Naive thymus-derived CD4-positive, alpha-beta T cell (primary cell): ENCODE measurements at regions of chr3 and their contacts with region 1.

Region 1: GRCh38 chr3:96863129-96863740 is 48.8 kb downstream of the EPHA6 start:
- DNase-seq: no peak
- ATAC-seq: no peak
- H3K4me3 ChIP-seq: no peak overlapping the region
- H3K4me3 Mint-ChIP-seq: no peak overlapping the region
- H3K27ac ChIP-seq: no peak overlapping the region
- H3K27ac Mint-ChIP-seq: no peak overlapping the region
- H3K4me1 ChIP-seq: no peaks in the 10 kb centered on the region
- H3K4me1 Mint-ChIP-seq: no peaks in the 10 kb centered on the region
- H3K27me3 ChIP-seq: no peaks in the 10 kb centered on the region
- H3K27me3 Mint-ChIP-seq: no peaks in the 10 kb centered on the region

Region 2: GRCh38 chr3:96657710-96658109 is 205.5 kb before region 1 on chr3:
- CTCF ChIA-PET with region 1: no interaction called
- POLR2A ChIA-PET with region 1: no interaction called
- intact Hi-C with region 1: no loop called
- DNase-seq: no peak
- ATAC-seq: no peak
- H3K4me3 ChIP-seq: no peak overlapping the region
- H3K4me3 Mint-ChIP-seq: no peak overlapping the region
- H3K27ac ChIP-seq: no peak overlapping the region
- H3K27ac Mint-ChIP-seq: no peak overlapping the region
- H3K4me1 ChIP-seq: no peaks in the 10 kb centered on the region
- H3K4me1 Mint-ChIP-seq: no peaks in the 10 kb centered on the region
- H3K27me3 ChIP-seq: no peaks in the 10 kb centered on the region
- H3K27me3 Mint-ChIP-seq: no peaks in the 10 kb centered on the region

Region 3: DNA sequence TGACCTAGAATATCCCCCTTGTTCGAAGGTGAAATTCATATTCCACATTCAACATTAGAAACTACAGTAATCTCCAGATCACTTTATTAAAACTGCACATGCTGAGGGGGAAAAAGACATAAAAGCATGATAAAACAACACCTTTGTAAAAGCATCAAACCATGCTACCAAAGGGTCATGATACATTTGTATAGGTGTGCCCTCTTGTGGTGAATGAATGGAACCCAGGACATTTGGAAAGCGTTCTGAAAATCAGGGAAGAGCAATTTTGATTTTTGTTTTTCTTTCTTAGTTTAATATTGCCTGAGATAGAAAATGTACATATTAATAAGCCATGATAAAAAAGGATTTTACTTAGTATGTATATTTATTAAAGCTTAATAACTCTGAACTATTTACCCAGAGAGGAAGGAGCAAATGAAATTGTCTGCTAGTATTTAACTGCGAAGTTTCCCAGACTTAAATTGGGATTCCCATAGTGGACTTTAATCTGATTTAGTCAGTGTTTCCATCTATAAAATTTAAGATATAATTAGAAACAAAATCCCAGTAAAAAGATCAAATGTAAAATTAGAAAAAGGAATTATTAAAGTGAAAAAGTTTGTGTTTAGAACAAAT is 795.5 kb after region 1 on chr3:
- CTCF ChIA-PET with region 1: no interaction called
- POLR2A ChIA-PET with region 1: no interaction called
- intact Hi-C with region 1: loop called in 1 of 2 experiments (anchors 10 kb)
- DNase-seq: no peak
- ATAC-seq: no peak
- H3K4me3 ChIP-seq: no peak overlapping the region
- H3K4me3 Mint-ChIP-seq: no peak overlapping the region
- H3K27ac ChIP-seq: no peak overlapping the region
- H3K27ac Mint-ChIP-seq: no peak overlapping the region
- H3K4me1 ChIP-seq: no peaks in the 10 kb centered on the region
- H3K4me1 Mint-ChIP-seq: no peaks in the 10 kb centered on the region
- H3K27me3 ChIP-seq: no peaks in the 10 kb centered on the region
- H3K27me3 Mint-ChIP-seq: peaks cover 0 to 4% (median 0%) of the 10 kb centered on the region in 5 donors

Region 4: GRCh38 chr3:97719156-97719821 is 856.1 kb after region 1 on chr3:
- CTCF ChIA-PET with region 1: no interaction called
- POLR2A ChIA-PET with region 1: no interaction called
- intact Hi-C with region 1: loop called in 1 of 2 experiments (anchors 2 kb)
- DNase-seq: peak; percentile 12 to 63 (median 50)
- ATAC-seq: peak; percentile 95
- H3K4me3 ChIP-seq: no peak overlapping the region
- H3K4me3 Mint-ChIP-seq: peak overlapping the region in 6 of 10 donors; percentile 35 to 60 (median 48)
- H3K27ac ChIP-seq: no peak overlapping the region
- H3K27ac Mint-ChIP-seq: peak overlapping the region in 1 of 9 donors; percentile 33
- H3K4me1 ChIP-seq: no peaks in the 10 kb centered on the region
- H3K4me1 Mint-ChIP-seq: no peaks in the 10 kb centered on the region
- H3K27me3 ChIP-seq: no peaks in the 10 kb centered on the region
- H3K27me3 Mint-ChIP-seq: peaks cover 0 to 20% (median 3%) of the 10 kb centered on the region in 5 donors

Region 5: GRCh38 chr3:98388147-98388546 is 1524.9 kb after region 1 on chr3:
- CTCF ChIA-PET with region 1: no interaction called
- POLR2A ChIA-PET with region 1: no interaction called
- intact Hi-C with region 1: no loop called
- DNase-seq: no peak
- ATAC-seq: no peak
- H3K4me3 ChIP-seq: no peak overlapping the region
- H3K4me3 Mint-ChIP-seq: no peak overlapping the region
- H3K27ac ChIP-seq: no peak overlapping the region
- H3K27ac Mint-ChIP-seq: no peak overlapping the region
- H3K4me1 ChIP-seq: no peaks in the 10 kb centered on the region
- H3K4me1 Mint-ChIP-seq: peaks cover 0 to 1% (median 0%) of the 10 kb centered on the region in 7 donors
- H3K27me3 ChIP-seq: no peaks in the 10 kb centered on the region
- H3K27me3 Mint-ChIP-seq: peaks cover 15 to 63% (median 26%) of the 10 kb centered on the region in 5 donors